ENCODE measurements at regions of chr12 and their contacts with region 1.

Region 1: DNA sequence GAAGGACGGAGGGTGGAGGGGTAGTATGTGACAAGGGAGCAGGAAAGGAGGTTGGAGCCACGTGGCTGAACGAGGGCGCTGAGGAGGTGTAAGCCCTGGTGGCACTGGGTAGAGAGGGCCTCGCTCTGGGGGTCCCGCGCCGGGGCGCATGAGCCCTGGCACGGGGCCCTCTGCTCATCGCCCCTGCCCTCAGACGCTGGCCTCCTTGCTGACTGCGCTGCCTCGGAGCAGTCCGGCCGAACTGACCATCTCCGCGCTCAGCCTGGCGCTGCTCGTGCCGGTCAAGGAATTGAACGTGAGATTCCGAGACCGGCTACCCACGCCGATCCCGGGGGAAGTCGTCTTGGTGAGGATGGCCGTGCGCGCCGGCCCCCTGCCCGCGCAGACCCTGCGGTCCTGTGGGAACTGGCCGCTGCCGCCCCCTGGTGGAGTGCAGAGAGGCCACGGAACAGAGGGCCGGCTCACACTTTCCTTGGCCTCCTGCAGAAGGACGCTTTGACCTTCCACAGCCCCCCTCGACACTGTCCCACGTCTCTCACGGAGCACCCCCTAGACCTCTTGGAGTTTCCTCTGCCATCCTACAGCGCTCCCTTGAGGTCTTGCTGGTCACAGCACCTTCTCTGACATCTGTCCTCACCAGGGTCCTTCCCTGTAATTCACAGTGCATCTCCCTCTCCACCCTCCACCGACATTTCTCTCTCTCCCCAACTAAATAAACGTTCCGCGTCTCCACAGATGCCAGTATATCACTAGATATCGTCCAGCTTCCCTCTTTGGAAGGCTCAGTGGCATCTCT is 10.5 kb downstream of the ARHGEF25 start:
- DNase-seq: peak; percentile 55 to 83 (median 75)
- H3K4me3 ChIP-seq: peak overlapping the region; percentile 27
- H3K27ac ChIP-seq: no peak overlapping the region
- H3K4me1 ChIP-seq: peaks cover 4% of the 10 kb centered on the region
- H3K27me3 ChIP-seq: no peaks in the 10 kb centered on the region
- CTCF ChIP-seq: peak; percentile 88 to 97 (median 92)
- EP300 ChIP-seq: no peak
- POLR2A ChIP-seq: no peak

Region 2: DNA sequence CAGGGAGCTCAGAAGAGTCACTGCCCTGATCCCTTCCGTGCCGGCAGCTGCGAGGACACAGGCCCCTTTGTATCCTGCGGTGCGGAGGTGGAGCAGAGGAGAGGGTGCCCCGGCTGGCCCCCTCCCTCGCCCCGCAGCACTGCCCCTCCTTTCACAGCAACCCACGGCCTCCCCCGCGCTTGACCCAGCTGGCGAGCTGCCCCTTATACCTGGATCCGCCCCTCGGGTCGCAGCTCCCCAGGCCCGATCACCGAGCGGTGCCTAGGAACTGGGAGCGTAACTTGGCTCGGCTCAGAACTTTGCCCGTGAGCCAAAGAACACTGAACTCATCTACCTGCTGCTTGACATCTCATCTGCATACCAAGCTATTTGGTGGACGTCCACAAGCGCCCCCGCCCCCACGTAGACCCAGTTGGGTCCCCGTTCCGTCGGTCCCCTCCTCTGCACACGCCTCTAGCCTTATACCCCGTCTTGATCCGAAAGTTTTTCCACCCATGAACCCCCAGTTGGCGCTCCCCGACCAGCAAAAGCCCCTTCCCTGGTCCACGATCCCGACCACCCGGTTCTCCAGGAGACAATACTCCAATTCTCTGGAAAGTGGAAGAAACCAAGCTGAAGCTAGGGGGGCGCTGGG is 1791.6 kb before region 1 on chr12:
- intact Hi-C with region 1: no loop called
- DNase-seq: peak; percentile 72 to 82 (median 80)
- H3K4me3 ChIP-seq: peak overlapping the region; percentile 72
- H3K27ac ChIP-seq: peak overlapping the region; percentile 86 to 89
- H3K4me1 ChIP-seq: peaks cover 13% of the 10 kb centered on the region
- H3K27me3 ChIP-seq: no peaks in the 10 kb centered on the region
- CTCF ChIP-seq: no peak
- EP300 ChIP-seq: no peak
- POLR2A ChIP-seq: peak; percentile 8

Region 3: DNA sequence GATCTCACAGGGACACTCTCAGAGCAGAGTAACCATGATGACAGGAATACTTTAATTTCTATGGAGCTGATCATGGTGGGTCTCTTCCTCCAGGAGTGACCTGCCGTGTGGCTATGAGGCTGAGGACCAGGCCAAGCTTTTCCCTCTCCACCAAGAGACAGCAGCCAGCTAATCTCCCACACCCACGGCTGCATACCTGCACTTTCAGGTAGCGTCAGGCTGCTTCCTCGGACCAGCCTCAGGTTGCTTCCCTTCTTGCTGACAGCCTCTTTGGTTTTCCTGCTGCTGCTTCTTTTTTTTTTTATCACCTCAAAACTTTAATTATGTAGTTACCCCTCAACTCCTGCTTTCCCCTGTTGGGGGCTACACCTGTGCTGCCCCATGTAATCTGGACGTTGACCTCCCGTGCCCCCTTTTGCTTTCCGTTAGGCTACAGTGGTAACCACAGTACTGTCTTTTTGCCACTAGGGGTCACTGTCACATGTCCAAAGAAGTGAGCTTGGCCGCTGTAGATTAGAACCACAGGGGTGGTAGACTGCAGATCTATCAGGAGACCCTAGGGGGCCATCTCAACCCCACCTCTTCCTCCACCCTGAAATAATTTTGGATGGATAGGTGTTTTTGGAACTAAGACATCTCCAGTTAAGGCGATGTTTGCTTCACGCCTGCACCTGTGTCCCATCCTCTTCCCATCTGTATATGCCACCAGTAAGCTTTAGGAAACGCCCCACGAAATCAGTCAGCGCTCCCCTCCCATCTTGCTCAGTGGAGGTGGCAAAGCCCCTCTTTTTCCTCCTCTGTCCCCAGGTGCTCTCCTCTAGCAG is 38.5 kb before region 1 on chr12:
- intact Hi-C with region 1: loop called (anchors 1 to 2 kb)
- DNase-seq: peak; percentile 43 to 74 (median 56)
- H3K4me3 ChIP-seq: no peak overlapping the region
- H3K27ac ChIP-seq: no peak overlapping the region
- H3K4me1 ChIP-seq: no peaks in the 10 kb centered on the region
- H3K27me3 ChIP-seq: no peaks in the 10 kb centered on the region
- CTCF ChIP-seq: peak; percentile 92 to 96 (median 93)
- EP300 ChIP-seq: no peak
- POLR2A ChIP-seq: no peak

Measured in ovary (tissue), 10 donors.